Activated CD4-positive, alpha-beta memory T cell treated with anti-CD3 and anti-CD28 coated beads for 36 hours (primary cell): ENCODE measurements at regions of chrX and their contacts with region 1.

Region 1: GRCh38 chrX:40688929-40689328 is 41.6 kb upstream of the CXorf38 start:
- DNase-seq: no peak
- H3K4me3 Mint-ChIP-seq: no peak overlapping the region
- H3K27ac Mint-ChIP-seq: no peak overlapping the region
- H3K4me1 Mint-ChIP-seq: peaks cover 7% of the 10 kb centered on the region
- H3K27me3 Mint-ChIP-seq: no peaks in the 10 kb centered on the region

Region 2: GRCh38 chrX:40552768-40553167 is 136.2 kb before region 1 on chrX:
- CTCF ChIA-PET with region 1: no interaction called
- POLR2A ChIA-PET with region 1: no interaction called
- intact Hi-C with region 1: no loop called
- DNase-seq: no peak
- H3K4me3 Mint-ChIP-seq: no peak overlapping the region
- H3K27ac Mint-ChIP-seq: no peak overlapping the region
- H3K4me1 Mint-ChIP-seq: no peaks in the 10 kb centered on the region
- H3K27me3 Mint-ChIP-seq: no peaks in the 10 kb centered on the region

Region 3: GRCh38 chrX:40644821-40645358 is 44.0 kb before region 1 on chrX:
- CTCF ChIA-PET with region 1: no interaction called
- POLR2A ChIA-PET with region 1: no interaction called
- intact Hi-C with region 1: no loop called
- DNase-seq: peak; percentile 61
- H3K4me3 Mint-ChIP-seq: peak overlapping the region; percentile 82
- H3K27ac Mint-ChIP-seq: peak overlapping the region; percentile 97
- H3K4me1 Mint-ChIP-seq: peaks cover 28% of the 10 kb centered on the region
- H3K27me3 Mint-ChIP-seq: no peaks in the 10 kb centered on the region

Region 4: DNA sequence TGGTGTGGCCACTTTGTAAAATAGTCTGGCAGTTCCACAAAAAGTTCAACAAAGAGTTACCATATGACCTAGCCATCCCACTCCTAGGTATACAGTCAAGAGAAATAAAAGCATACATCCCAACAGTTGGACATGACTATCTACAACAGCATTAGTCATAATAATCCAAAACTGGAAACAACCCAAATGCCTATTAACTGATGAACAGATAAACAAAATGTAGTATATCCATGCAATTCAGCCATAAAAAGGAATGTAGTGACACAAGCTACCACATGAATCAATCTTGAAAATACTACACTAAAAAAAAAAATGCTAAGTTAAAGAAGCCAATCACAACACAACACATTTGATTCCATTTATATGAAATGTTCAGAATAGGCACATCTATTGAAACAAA is 30.3 kb after region 1 on chrX:
- CTCF ChIA-PET with region 1: no interaction called
- POLR2A ChIA-PET with region 1: no interaction called
- intact Hi-C with region 1: loop called (anchors 2 kb)
- DNase-seq: no peak
- H3K4me3 Mint-ChIP-seq: no peak overlapping the region
- H3K27ac Mint-ChIP-seq: no peak overlapping the region
- H3K4me1 Mint-ChIP-seq: peaks cover 34% of the 10 kb centered on the region
- H3K27me3 Mint-ChIP-seq: no peaks in the 10 kb centered on the region

Region 5: DNA sequence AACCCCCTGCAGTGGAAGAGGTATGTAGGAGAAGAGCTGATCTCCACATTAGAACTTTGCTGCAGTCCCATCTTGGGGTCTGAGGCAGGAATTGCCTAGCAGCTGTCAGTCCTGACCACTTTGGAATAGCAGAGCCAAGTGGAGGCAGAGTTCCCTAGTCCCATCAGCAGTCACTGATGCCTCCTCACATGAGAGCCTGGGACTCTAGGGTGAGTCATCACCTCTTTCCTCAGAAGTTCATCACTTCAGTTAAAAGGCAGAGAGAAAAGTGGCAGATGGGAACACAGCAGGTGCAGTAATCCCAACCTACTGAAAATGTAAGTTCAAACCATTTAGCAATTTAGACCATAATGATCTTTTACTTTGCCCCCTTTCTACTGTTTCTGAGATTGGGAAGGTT is 120.3 kb after region 1 on chrX:
- CTCF ChIA-PET with region 1: no interaction called
- POLR2A ChIA-PET with region 1: no interaction called
- intact Hi-C with region 1: no loop called
- DNase-seq: no peak
- H3K4me3 Mint-ChIP-seq: no peak overlapping the region
- H3K27ac Mint-ChIP-seq: no peak overlapping the region
- H3K4me1 Mint-ChIP-seq: peaks cover 6% of the 10 kb centered on the region
- H3K27me3 Mint-ChIP-seq: no peaks in the 10 kb centered on the region

Region 6: GRCh38 chrX:41634284-41634683 is 945.4 kb after region 1 on chrX:
- CTCF ChIA-PET with region 1: no interaction called
- POLR2A ChIA-PET with region 1: no interaction called
- intact Hi-C with region 1: no loop called
- DNase-seq: no peak
- H3K4me3 Mint-ChIP-seq: no peak overlapping the region
- H3K27ac Mint-ChIP-seq: no peak overlapping the region
- H3K4me1 Mint-ChIP-seq: peaks cover 1% of the 10 kb centered on the region
- H3K27me3 Mint-ChIP-seq: no peaks in the 10 kb centered on the region